Activated CD4-positive, alpha-beta memory T cell treated with anti-CD3 and anti-CD28 coated beads, Interleukin-2, amount 10 ng/mL, durations not matched to agents 7 days and 5 days (primary cell): ENCODE measurements at regions of chr12 and their contacts with region 1.

Region 1: GRCh38 chr12:56636675-56637540 is 6.8 kb upstream of the BAZ2A start:
- DNase-seq: peak; percentile 92
- H3K4me3 Mint-ChIP-seq: peak overlapping the region; percentile 96
- H3K27ac Mint-ChIP-seq: peak overlapping the region; percentile 80
- H3K4me1 Mint-ChIP-seq: peaks cover 59% of the 10 kb centered on the region
- H3K27me3 Mint-ChIP-seq: no peaks in the 10 kb centered on the region

Region 2: GRCh38 chr12:56601503-56601902 is 35.4 kb before region 1 on chr12:
- CTCF ChIA-PET with region 1: interaction called, 18 read pairs
- POLR2A ChIA-PET with region 1: interaction called, 14 read pairs
- DNase-seq: peak; percentile 33
- H3K4me3 Mint-ChIP-seq: no peak overlapping the region
- H3K27ac Mint-ChIP-seq: peak overlapping the region; percentile 24
- H3K4me1 Mint-ChIP-seq: no peaks in the 10 kb centered on the region
- H3K27me3 Mint-ChIP-seq: no peaks in the 10 kb centered on the region

Region 3: GRCh38 chr12:56657416-56658379 is 20.8 kb after region 1 on chr12:
- CTCF ChIA-PET with region 1: interaction called, 8 read pairs
- POLR2A ChIA-PET with region 1: interaction called, 11 read pairs
- DNase-seq: peak; percentile 14
- H3K4me3 Mint-ChIP-seq: no peak overlapping the region
- H3K27ac Mint-ChIP-seq: no peak overlapping the region
- H3K4me1 Mint-ChIP-seq: peaks cover 10% of the 10 kb centered on the region
- H3K27me3 Mint-ChIP-seq: no peaks in the 10 kb centered on the region

Region 4: GRCh38 chr12:56670836-56671235 is 33.9 kb after region 1 on chr12:
- CTCF ChIA-PET with region 1: interaction called, 17 read pairs
- POLR2A ChIA-PET with region 1: interaction called, 8 read pairs
- DNase-seq: no peak
- H3K4me3 Mint-ChIP-seq: no peak overlapping the region
- H3K27ac Mint-ChIP-seq: peak overlapping the region; percentile 52
- H3K4me1 Mint-ChIP-seq: peaks cover 59% of the 10 kb centered on the region
- H3K27me3 Mint-ChIP-seq: no peaks in the 10 kb centered on the region

Region 5: GRCh38 chr12:56677680-56678079 is 40.8 kb after region 1 on chr12:
- CTCF ChIA-PET with region 1: interaction called, 65 read pairs
- POLR2A ChIA-PET with region 1: interaction called, 65 read pairs
- DNase-seq: no peak
- H3K4me3 Mint-ChIP-seq: no peak overlapping the region
- H3K27ac Mint-ChIP-seq: peak overlapping the region; percentile 21
- H3K4me1 Mint-ChIP-seq: peaks cover 69% of the 10 kb centered on the region
- H3K27me3 Mint-ChIP-seq: no peaks in the 10 kb centered on the region